Natural killer cell (primary cell): ENCODE measurements at regions of chr3 and their contacts with region 1.

Region 1: DNA sequence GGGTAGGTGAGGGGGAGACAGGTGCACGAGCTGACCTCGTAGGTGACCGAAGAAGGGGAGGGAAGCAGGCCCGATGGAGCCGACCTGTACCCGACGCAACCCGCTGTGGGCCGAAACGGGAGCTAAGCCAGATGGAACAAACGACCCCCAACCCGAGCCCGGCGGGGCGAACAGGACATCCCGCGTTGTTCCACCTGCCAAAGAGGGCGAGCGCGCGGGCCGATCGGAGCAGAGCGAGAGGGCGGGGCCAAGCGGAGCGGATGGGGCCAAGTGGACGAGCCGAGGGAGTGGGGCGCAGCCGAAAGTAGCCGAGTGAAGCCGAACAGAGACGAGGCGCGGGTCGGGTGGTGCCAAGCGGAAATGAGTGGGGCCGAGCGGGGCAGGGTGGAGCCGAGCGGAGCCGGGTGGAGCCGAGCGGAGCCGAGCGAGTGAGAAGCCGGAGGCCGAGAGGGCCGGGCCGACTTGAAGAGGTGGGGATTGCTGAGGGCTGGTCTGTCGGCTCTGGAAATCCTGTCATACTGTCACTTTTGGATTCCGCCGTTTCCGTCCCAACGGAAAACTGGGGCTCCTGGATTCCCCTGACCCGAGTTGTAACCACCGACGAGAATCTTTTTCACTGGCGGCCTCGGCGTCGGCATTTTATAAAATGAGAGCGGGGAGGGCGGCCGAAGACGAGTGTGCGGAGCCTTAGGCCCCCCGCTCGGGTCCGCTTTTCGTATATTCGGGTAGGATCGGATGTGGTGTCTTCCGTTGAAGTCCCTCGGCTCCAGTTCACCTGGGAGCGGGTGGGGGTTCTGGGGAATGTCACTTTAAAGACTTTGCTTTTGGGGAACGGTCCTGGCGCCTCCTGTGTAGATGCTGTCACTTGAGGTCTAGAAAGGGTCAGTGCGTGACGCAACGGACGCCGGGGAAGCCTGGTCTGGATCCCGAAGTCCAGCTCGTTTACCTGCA is 15.6 kb upstream of the WNT7A start:
- DNase-seq: peak; percentile 95 to 96
- ATAC-seq: peak; percentile 98 to 99 (median 98)
- H3K4me3 ChIP-seq: peak overlapping the region; percentile 72
- H3K4me3 Mint-ChIP-seq: peak overlapping the region; percentile 76
- H3K27ac ChIP-seq: peak overlapping the region; percentile 69
- H3K27ac Mint-ChIP-seq: peak overlapping the region; percentile 86 to 92
- H3K4me1 ChIP-seq: peaks cover 30% of the 10 kb centered on the region
- H3K4me1 Mint-ChIP-seq: peaks cover 21 to 26% of the 10 kb centered on the region in 2 donors
- H3K27me3 ChIP-seq: no peaks in the 10 kb centered on the region
- H3K27me3 Mint-ChIP-seq: peaks cover 0 to 6% of the 10 kb centered on the region in 2 donors
- CTCF ChIP-seq: no peak

Region 2: GRCh38 chr3:13427662-13428603 is 467.5 kb before region 1 on chr3:
- intact Hi-C with region 1: no loop called
- DNase-seq: peak in 1 of 2 donors; percentile 80
- ATAC-seq: peak in 1 of 3 donors; percentile 54
- H3K4me3 ChIP-seq: no peak overlapping the region
- H3K4me3 Mint-ChIP-seq: peak overlapping the region; percentile 6
- H3K27ac ChIP-seq: no peak overlapping the region
- H3K27ac Mint-ChIP-seq: peak overlapping the region in 1 of 2 donors; percentile 48
- H3K4me1 ChIP-seq: peaks cover 5% of the 10 kb centered on the region
- H3K4me1 Mint-ChIP-seq: peaks cover 11 to 13% of the 10 kb centered on the region in 2 donors
- H3K27me3 ChIP-seq: no peaks in the 10 kb centered on the region
- H3K27me3 Mint-ChIP-seq: no peaks in the 10 kb centered on the region
- CTCF ChIP-seq: no peak

Region 3: GRCh38 chr3:13762906-13763305 is 132.5 kb before region 1 on chr3:
- intact Hi-C with region 1: no loop called
- DNase-seq: no peak
- ATAC-seq: no peak
- H3K4me3 ChIP-seq: no peak overlapping the region
- H3K4me3 Mint-ChIP-seq: no peak overlapping the region
- H3K27ac ChIP-seq: no peak overlapping the region
- H3K27ac Mint-ChIP-seq: no peak overlapping the region
- H3K4me1 ChIP-seq: no peaks in the 10 kb centered on the region
- H3K4me1 Mint-ChIP-seq: no peaks in the 10 kb centered on the region
- H3K27me3 ChIP-seq: no peaks in the 10 kb centered on the region
- H3K27me3 Mint-ChIP-seq: peaks cover 13 to 28% of the 10 kb centered on the region in 2 donors
- CTCF ChIP-seq: no peak

Region 4: DNA sequence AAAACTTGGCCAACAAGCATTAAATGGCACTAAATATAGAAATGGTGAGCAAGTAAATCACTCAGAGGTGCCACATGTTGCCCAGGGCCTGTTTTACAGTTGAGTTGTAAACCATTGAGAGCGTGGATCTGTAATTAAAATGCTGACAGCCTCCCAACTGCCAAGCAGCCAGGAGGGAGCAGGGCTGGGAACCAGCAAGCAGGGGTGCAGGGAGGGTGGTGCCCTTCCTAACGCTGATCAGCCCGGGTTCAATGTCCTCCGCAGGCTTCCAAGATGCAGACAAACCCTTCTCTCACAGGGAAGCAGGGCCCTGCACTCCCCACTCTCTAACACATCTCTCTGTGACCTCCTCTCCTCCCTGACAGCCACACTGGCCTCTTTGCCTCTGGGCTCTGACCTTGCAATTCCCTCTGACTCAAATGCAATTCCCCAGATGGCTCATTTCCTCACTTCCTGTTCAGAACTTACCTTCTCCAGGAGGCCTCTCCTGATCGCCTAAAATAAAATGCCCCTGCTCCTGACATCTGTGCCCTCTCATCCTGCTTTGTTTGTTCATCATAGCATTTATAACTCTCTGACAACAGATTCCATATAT is 55.6 kb before region 1 on chr3:
- intact Hi-C with region 1: no loop called
- DNase-seq: no peak
- ATAC-seq: no peak
- H3K4me3 ChIP-seq: no peak overlapping the region
- H3K4me3 Mint-ChIP-seq: no peak overlapping the region
- H3K27ac ChIP-seq: no peak overlapping the region
- H3K27ac Mint-ChIP-seq: no peak overlapping the region
- H3K4me1 ChIP-seq: no peaks in the 10 kb centered on the region
- H3K4me1 Mint-ChIP-seq: no peaks in the 10 kb centered on the region
- H3K27me3 ChIP-seq: no peaks in the 10 kb centered on the region
- H3K27me3 Mint-ChIP-seq: peaks cover 0 to 4% of the 10 kb centered on the region in 2 donors
- CTCF ChIP-seq: no peak

Region 5: DNA sequence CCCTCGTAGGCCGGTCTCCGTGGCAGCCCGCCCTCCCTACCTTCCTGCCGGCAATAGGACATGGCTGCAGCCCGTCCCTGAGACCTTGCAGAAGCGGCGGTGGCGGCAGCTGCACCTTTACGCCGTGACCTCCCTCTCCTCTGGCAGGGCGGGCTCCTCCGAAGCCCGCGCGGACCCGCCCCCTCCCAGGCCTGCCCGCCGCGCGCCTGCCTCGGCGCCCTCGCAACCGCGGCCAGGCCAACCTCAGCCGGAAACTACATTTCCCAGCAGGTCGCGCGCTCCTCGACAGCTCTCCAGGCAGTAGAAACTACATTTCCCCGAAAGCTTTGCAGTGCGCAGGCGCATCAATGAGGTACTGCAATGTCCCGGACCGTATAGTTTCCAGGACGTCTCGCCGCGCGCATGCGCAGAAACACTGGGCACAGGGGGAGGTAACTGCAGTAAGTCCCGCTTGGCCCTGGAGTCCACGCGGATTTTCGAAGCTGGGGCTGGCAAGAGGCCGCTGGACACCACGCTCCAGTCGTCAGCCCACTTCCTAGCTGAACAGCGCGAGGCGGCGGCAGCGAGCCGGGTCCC is 229.3 kb after region 1 on chr3 and contains the starts of genes CHCHD4 and TMEM43:
- intact Hi-C with region 1: loop called (anchors 1 kb)
- DNase-seq: peak; percentile 97 to 100
- ATAC-seq: peak; percentile 89 to 97 (median 90)
- H3K4me3 ChIP-seq: peak within 1 kb of the TSS; percentile 97
- H3K4me3 Mint-ChIP-seq: peak within 1 kb of the TSS; percentile 96
- H3K27ac ChIP-seq: peak within 1 kb of the TSS; percentile 91
- H3K27ac Mint-ChIP-seq: peak within 1 kb of the TSS; percentile 92 to 93
- H3K4me1 ChIP-seq: peaks cover 39% of the 10 kb centered on the region
- H3K4me1 Mint-ChIP-seq: peaks cover 50 to 55% of the 10 kb centered on the region in 2 donors
- H3K27me3 ChIP-seq: no peaks in the 10 kb centered on the region
- H3K27me3 Mint-ChIP-seq: no peaks in the 10 kb centered on the region
- CTCF ChIP-seq: no peak
- total RNA-seq, gene CHCHD4: 2.1 to 4.3 (median 3.4) TPM
- total RNA-seq, gene TMEM43: 49.5 to 61.1 (median 54.1) TPM

Region 6: DNA sequence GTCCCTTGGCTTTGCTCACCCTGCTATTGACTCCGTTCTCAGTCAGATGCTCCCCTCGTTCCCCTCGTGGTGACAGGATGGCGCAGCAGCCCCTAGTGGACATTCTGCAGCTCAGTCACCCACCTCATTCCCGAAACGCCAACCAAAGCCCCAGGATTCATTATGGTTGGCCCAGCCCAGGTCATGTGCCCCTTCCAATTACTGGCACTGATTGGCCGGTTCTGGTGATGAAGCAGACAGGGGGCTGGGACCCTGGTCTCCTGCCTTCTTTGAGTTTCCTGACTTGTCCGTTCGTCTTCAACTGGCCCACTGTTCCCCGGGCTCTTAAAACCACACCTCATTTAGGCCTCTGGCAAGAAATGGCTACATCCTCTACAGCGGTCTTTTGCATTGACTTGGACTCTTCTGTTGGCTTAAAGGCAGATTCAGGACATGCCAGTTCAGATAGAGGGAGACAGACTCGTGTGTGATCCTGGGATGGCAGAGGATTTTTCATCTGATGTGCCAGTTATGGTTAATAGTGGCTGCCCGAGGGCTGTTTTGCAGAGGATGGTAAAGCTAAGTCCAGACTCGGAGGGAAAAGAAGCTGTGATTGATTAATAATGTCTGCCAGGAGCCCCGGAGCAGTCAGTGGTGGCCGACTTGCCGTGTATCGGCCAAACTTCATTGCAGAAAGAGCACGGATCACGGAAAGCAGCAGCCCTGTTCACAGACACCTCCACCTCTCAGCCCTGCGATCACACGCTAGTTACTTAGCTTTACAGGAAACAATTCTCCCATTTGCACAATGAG is 321.0 kb after region 1 on chr3:
- intact Hi-C with region 1: loop called (anchors 1 kb)
- DNase-seq: peak; percentile 47 to 65
- ATAC-seq: peak in 2 of 3 donors; percentile 67 to 96
- H3K4me3 ChIP-seq: no peak overlapping the region
- H3K4me3 Mint-ChIP-seq: peak overlapping the region; percentile 49
- H3K27ac ChIP-seq: no peak overlapping the region
- H3K27ac Mint-ChIP-seq: peak overlapping the region in 1 of 2 donors; percentile 88
- H3K4me1 ChIP-seq: no peaks in the 10 kb centered on the region
- H3K4me1 Mint-ChIP-seq: peaks cover 0 to 15% of the 10 kb centered on the region in 2 donors
- H3K27me3 ChIP-seq: no peaks in the 10 kb centered on the region
- H3K27me3 Mint-ChIP-seq: peaks cover 8 to 9% of the 10 kb centered on the region in 2 donors
- CTCF ChIP-seq: peak; percentile 61

Region 7: DNA sequence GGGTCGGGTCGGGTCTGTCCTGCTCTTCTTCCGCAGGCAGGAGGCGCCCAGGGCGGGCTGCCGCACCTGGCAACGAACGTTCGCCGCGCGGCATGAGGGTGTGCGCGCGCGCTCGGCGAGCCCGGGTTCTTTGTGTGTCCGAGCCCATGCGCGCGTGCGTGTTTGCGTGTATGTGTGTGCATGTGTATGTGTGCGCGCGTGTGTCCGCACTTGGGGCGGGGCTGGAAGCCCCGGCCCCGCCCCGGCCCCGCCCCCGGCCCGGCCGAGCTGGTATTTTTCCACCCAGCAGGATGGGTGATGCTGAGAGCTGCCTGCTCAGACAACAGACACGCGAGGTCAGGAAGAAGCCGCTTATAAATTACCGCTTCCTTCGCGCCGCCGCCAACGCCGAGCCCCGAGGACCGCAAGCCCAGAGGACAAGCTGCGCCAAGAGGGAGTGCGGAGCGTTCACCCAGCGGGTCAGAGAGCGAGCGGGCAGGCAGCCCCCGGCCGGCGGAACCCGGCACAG is 506.9 kb after region 1 on chr3 and contains the start of gene SLC6A6:
- intact Hi-C with region 1: loop called (anchors 1 kb)
- DNase-seq: peak; percentile 79 to 98
- ATAC-seq: peak; percentile 72 to 89 (median 80)
- H3K4me3 ChIP-seq: peak within 1 kb of the TSS; percentile 47
- H3K4me3 Mint-ChIP-seq: peak within 1 kb of the TSS; percentile 98
- H3K27ac ChIP-seq: peak within 1 kb of the TSS; percentile 71
- H3K27ac Mint-ChIP-seq: peak within 1 kb of the TSS; percentile 90 to 94
- H3K4me1 ChIP-seq: peaks cover 45% of the 10 kb centered on the region
- H3K4me1 Mint-ChIP-seq: peaks cover 16 to 50% of the 10 kb centered on the region in 2 donors
- H3K27me3 ChIP-seq: no peaks in the 10 kb centered on the region
- H3K27me3 Mint-ChIP-seq: no peaks in the 10 kb centered on the region
- CTCF ChIP-seq: peak; percentile 62
- total RNA-seq, gene SLC6A6: 43.7 to 55.4 (median 50.1) TPM

Region 8: GRCh38 chr3:14921078-14921616 is 1025.7 kb after region 1 on chr3:
- intact Hi-C with region 1: loop called (anchors 10 kb)
- DNase-seq: peak; percentile 73 to 90
- ATAC-seq: peak; percentile 92 to 99 (median 99)
- H3K4me3 ChIP-seq: no peak overlapping the region
- H3K4me3 Mint-ChIP-seq: no peak overlapping the region
- H3K27ac ChIP-seq: no peak overlapping the region
- H3K27ac Mint-ChIP-seq: no peak overlapping the region
- H3K4me1 ChIP-seq: no peaks in the 10 kb centered on the region
- H3K4me1 Mint-ChIP-seq: peaks cover 0 to 8% of the 10 kb centered on the region in 2 donors
- H3K27me3 ChIP-seq: no peaks in the 10 kb centered on the region
- H3K27me3 Mint-ChIP-seq: no peaks in the 10 kb centered on the region
- CTCF ChIP-seq: peak; percentile 96